Left cardiac atrium (tissue), 4 donors: ENCODE measurements at regions of chr11 and their contacts with region 1.

Region 1: GRCh38 chr11:100991541-100991940 is 138.1 kb downstream of the PGR start:
- DNase-seq: no peak
- ATAC-seq: no peak

Region 2: GRCh38 chr11:101034076-101034475 is 42.5 kb after region 1 on chr11:
- intact Hi-C with region 1: no loop called
- DNase-seq: peak; percentile 66
- ATAC-seq: peak; percentile 93 to 94

Region 3: DNA sequence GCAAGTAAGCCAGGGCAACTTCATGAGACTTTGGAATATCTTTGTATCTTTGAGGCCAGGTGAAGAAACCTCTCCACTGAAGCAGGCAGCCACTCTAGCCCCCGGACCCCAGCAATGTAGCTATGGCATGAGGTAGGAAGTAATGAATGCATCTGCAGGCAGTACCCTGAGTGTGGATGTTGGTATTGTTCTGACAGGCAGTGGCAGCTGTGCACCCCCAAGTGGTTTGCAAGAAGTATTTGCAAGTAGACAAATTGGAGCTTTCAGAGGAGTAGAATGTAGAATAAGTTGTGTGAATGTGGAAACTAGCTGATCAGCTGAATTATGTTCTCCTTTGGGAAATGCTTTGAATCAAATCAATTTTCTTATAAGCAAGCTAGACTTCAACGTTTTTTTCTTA is 332.5 kb after region 1 on chr11:
- intact Hi-C with region 1: loop called in 1 of 2 experiments (anchors 10 kb)
- DNase-seq: no peak
- ATAC-seq: no peak